ENCODE measurements at regions of chr3 and their contacts with region 1.

Region 1: DNA sequence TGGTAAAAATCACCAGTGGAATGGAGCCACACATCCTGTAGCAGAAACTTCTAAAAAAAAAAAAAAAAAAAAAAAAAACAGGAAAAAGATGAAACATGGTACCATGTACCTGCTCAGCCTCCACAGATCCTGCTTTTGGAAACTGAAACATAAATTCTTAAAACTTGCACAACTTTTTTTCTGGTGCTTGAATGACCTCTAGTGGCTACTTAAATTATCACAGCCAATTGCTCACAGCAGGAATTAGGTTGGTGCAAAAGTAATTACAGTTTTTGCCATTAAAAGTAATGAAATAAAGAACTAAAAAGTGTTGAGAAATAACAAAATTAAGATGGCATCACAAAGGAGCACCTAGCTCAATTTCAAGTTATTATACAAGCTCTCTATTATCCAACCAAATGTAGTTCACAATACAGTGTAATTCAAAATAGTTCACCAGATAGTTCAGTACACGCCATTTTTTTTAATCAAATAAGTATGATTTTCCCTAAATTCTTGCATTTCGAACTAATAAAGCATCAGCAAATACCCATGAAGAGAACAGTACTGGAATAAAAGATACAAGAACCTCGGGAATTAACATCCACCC is 80.6 kb downstream of the ULK4 start:
- H3K4me3 Mint-ChIP-seq: no peak overlapping the region
- H3K27ac Mint-ChIP-seq: no peak overlapping the region
- H3K4me1 Mint-ChIP-seq: no peaks in the 10 kb centered on the region
- H3K27me3 Mint-ChIP-seq: no peaks in the 10 kb centered on the region

Region 2: DNA sequence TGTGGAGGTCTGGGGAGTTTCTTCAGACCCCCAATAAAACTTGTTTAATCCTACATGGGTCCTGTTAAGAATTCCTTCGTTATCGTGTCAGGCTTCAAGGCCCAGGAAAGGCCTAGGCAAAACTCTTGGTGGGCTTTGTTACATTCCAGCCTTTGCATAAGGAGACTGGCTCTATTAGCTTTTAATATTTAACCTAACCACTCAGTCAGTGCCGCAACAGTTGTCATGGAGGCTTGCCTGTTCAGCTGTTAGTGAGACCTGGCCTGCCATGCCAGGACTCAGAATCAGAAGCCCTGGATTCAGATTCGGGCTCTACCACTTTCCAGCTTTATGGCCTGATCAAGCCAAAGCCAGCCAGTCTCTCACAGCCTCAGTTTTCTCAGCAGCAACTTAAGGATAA is 1552.3 kb before region 1 on chr3:
- intact Hi-C with region 1: loop called (anchors 1 kb)
- H3K4me3 Mint-ChIP-seq: no peak overlapping the region
- H3K27ac Mint-ChIP-seq: no peak overlapping the region
- H3K4me1 Mint-ChIP-seq: no peaks in the 10 kb centered on the region
- H3K27me3 Mint-ChIP-seq: no peaks in the 10 kb centered on the region

Measured in dendritic cell treated with granulocyte-macrophage colony-stimulating factor and Interleukin-4, amounts not matched to agents 40 ng/mL and 50 ng/mL, for 4 days (primary cell).